GM10248 (cell line): ENCODE measurements at regions of chr14 and their contacts with region 1.

Region 1: DNA sequence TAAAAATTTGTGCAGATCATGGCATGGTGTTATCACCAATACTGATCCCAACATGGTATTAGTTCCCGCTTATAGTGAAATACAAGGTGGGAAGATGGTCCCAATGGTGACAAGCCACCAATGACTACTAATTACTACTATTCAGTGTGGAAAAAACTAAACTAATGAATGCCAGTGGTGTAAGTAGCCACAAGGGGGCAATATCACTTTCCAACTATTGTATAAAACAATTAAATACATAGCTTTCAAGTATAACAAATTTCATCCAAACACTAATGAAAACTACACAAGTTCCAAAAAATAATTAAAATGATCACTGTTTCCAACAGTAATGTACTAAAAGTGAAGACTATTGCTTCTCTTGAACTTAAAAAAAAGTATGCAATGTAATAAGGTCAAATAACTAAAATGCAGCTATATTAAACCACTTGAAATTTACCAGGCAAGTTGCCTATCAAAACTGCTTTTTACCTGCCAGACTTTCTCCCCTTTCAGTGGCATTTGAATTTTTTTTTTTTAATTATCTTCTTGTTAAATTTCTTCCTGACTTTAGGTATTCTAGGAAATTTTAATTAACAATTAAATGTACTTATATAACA is 58.0 kb downstream of the PAPLN start:
- DNase-seq: peak; percentile 43
- CTCF ChIP-seq: peak; percentile 64

Region 2: DNA sequence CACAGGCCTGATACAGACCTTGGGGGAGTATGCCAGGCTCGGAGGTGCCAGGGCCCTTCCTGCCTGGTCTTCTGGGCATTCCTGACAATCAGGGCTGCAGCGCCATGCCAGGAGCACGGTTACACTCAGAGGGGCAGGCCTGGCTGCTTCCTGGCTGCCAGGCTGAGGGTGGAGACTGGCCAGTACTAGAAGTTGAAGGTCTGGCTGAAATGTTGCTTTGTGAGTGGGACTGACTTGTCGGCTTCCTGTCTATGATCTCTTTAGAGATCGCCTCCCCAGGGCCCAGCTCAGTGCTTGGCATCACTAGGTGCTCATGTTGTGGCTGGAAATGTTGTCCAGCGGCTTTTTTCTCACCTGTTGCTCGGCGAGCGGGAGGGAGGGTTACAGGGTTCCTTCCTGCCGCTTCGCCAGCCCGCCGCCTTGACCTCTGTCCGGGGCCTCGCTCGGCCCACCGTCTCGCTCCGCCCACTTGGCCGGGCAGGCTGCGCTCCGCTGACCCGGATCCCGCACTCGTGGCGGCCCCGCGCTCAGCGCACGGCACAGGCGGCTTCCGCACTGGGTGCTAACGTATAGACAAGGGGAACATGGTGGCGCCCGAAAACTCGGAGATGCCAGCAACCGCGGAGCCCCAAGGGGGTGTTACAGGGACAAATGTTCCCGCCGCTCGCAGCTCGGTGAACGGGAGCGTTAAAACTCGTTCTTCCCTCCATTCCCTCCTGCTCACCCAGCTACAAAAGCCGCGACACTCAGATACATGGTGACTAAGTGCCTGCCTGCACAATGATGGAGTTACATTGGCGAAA is 25.4 kb before region 1 on chr14:
- CTCF ChIA-PET with region 1: interaction called, 16 read pairs
- POLR2A ChIA-PET with region 1: no interaction called
- DNase-seq: peak; percentile 77
- CTCF ChIP-seq: no peak

Region 3: DNA sequence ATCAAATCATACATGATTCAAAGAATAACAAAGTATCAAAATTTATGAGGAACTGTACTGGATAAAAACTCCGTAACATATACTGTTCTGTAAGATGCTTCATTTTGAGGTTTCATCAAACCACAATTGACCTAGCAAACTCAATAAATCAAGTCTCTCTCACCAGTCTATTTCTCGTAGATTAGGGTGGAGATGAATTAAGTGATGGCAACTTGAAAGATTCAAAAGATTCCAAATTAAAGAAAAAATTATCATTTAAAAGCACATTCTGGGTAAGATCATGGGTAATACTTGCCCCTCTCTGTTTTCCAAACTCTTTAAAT is 16.4 kb after region 1 on chr14:
- CTCF ChIA-PET with region 1: interaction called, 47 read pairs
- POLR2A ChIA-PET with region 1: no interaction called
- DNase-seq: no peak
- CTCF ChIP-seq: no peak

Region 4: GRCh38 chr14:73463411-73463810 is 168.1 kb after region 1 on chr14:
- CTCF ChIA-PET with region 1: interaction called, 64 read pairs
- POLR2A ChIA-PET with region 1: no interaction called
- DNase-seq: no peak
- CTCF ChIP-seq: no peak

Region 5: GRCh38 chr14:73477618-73478266 is 182.4 kb after region 1 on chr14:
- CTCF ChIA-PET with region 1: interaction called, 64 read pairs
- POLR2A ChIA-PET with region 1: no interaction called
- DNase-seq: peak; percentile 73
- CTCF ChIP-seq: no peak